ENCODE measurements at regions of chr12 and their contacts with region 1.

Region 1: DNA sequence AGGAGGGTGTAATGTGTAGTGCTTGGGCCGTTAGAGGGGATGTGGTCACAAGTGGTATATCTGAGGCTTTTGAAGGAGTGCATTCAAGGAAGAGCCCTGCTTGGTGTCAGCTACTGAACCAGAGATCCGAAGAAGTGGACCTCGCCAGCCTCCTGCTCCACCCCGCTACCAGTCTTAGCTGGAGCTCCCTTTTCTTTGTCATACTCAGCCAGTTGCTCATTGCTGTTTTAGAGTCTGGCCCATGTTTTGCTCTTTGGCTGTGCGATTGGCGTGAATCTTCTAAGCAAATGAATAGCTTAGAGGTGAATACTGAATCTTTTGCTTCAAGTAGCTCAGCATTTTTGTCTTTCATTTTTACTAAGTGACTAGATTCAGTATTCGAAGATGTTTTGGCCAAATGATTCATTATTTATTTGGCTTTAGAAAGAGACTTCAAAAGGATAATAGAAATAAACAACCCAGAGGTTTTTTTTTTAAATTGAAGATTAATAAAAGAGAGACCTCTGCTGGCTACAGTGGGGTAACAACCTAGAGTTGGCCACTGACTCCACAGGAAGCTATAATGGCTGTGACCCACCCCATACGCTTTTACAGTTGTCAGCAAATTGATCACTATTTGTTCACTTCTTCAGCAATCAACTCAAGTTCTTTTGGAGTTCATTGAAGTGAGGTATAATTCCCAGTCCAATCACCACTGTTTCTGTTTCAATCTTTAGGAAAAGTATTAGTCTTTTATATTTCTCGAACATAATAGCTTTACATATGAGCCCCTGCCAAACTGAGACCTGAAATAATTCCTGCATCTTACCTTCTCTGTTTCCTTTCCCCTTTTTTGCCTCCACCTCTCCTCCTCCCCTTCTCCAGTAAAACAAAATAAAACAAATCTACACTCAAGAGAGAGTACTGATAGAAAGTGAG is 19.9 kb downstream of the CDKN1B start:
- DNase-seq: no peak
- CTCF ChIP-seq: peak; percentile 52

Region 2: DNA sequence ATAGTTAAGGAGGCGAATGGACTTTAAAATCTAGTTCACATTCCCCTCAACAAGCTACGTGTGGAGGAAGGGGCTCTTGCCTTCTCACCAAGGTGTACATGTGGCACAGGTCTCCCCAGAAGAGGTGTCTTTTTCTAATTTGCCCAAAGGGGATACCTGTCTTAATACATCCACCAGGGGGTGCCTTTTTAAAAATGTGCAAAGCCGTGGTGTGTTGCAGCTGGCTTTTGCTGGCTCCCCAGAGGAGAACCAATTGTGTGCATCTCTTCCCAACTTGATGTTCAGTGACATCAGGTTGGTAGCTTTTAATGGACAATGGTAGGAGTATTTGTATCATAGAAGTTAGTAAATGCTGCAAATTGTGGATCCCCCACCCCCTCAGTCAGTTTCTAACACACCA is 91.5 kb before region 1 on chr12:
- CTCF ChIA-PET with region 1: interaction called, 32 read pairs
- POLR2A ChIA-PET with region 1: no interaction called
- DNase-seq: peak; percentile 62
- CTCF ChIP-seq: peak; percentile 36

Region 3: GRCh38 chr12:12724661-12725545 is 12.1 kb before region 1 on chr12:
- CTCF ChIA-PET with region 1: interaction called, 72 read pairs
- POLR2A ChIA-PET with region 1: interaction called, 3 read pairs
- DNase-seq: no peak
- CTCF ChIP-seq: no peak

Region 4: DNA sequence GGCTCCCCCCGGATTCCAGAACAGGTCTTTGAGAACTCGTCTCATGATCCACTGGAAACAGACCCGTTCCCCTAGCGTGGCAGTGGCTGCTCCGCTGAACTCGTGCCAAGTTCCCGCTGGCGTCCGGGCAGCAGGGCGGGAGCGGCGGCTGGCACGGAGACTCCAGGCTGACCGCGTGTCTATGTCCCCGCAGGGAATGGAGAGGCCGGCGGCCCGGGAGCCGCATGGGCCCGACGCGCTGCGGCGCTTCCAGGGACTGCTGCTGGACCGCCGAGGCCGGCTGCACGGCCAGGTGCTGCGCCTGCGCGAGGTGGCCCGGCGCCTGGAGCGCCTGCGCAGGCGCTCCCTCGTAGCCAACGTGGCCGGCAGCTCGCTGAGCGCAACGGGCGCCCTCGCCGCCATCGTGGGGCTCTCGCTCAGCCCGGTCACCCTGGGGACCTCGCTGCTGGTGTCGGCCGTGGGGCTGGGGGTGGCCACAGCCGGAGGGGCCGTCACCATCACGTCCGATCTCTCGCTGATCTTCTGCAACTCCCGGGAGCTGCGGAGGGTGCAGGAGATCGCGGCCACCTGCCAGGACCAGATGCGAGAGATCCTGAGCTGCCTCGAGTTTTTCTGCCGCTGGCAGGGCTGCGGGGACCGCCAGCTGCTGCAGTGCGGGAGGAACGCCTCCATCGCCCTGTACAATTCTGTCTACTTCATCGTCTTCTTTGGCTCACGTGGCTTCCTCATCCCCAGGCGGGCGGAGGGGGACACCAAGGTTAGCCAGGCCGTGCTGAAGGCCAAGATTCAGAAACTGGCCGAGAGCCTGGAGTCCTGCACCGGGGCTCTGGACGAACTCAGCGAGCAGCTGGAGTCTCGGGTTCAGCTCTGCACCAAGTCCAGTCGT is 49.9 kb after region 1 on chr12:
- CTCF ChIA-PET with region 1: interaction called, 11 read pairs
- POLR2A ChIA-PET with region 1: no interaction called
- DNase-seq: peak; percentile 96
- CTCF ChIP-seq: peak; percentile 2